HEK293 (cell line): ENCODE measurements at regions of chr17 and their contacts with region 1.

Region 1: DNA sequence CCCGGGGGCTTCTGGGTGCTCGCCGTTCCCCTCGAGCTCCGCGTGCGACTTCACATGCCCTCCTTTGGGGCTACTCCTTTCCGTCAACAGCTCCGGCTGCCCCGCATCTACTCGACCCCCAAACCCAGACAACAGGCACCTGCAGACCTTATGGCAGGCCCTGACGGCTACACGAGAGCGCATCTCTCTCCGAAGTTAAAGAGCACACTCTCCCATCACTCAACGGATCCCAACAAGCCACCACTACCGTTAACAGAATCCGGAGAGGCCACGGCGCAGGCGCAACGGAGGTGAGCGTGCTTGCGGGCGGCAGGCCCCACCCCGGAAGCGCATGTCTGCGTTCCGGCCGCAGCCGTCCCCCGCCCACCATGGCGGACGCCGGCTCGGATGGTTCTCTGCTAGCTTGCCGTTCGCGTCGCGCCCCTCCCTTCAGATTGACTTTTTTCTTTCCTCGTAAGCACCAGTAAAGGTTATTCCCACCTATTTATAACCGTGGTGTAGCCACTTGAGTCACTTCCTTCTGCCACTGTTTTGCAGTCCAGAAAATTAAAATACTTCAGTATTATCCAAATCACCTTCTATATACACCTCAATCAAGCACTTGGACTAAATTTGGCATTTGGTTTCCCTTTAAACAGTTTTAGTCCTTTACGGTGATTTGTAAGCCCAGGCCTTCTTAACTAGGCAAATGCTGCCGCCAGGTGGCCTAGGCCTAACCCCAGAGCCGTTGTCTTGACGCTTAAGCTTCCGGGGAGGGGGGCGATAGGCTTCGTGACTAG is at the start of gene POLG2:
- H3K4me3 ChIP-seq: peak within 1 kb of the TSS; percentile 75
- H3K27ac ChIP-seq: peak within 1 kb of the TSS; percentile 73
- H3K4me1 ChIP-seq: no peaks in the 10 kb centered on the region
- CTCF ChIP-seq: peak; percentile 62

Region 2: DNA sequence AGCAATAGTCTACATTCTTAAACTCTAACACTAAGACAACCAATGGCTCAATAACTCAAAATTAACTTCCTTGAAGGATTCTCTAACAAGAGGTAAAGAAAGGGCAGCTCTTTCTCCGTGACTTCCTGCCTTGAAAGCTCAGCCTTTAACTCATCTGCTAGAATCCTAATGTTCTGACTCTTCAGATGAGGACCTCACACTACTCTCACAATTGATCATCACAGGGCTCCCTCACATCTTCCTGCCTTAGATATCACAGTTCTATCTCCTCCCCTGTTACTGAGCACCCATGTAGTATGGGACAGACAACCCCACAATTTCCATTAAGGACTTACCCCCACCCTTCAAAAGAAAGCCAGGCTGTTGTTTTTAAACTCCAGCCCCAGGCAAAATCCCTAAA is 131.7 kb after region 1 on chr17:
- CTCF ChIA-PET with region 1: no interaction called
- POLR2A ChIA-PET with region 1: interaction called, 14 read pairs
- H3K4me3 ChIP-seq: no peak overlapping the region
- H3K27ac ChIP-seq: no peak overlapping the region
- H3K4me1 ChIP-seq: peaks cover 8% of the 10 kb centered on the region
- CTCF ChIP-seq: no peak